Heart right ventricle (tissue), 16 donors: ENCODE measurements at regions of chr5 and their contacts with region 1.

Region 1: GRCh38 chr5:150357326-150358260 is at the start of gene TCOF1:
- DNase-seq: peak; percentile 96 to 98
- ATAC-seq: peak; percentile 97 to 100 (median 99)
- H3K4me3 ChIP-seq: peak within 1 kb of the TSS; percentile 72 to 99 (median 92)
- H3K27ac ChIP-seq: peak within 1 kb of the TSS in 9 of 10 donors; percentile 49 to 87 (median 62)
- H3K4me1 ChIP-seq: peaks cover 0 to 25% (median 16%) of the 10 kb centered on the region in 9 donors
- H3K27me3 ChIP-seq: no peaks in the 10 kb centered on the region
- CTCF ChIP-seq: no peak
- total RNA-seq, gene TCOF1: 12.4 to 21.3 (median 14.3) TPM

Region 2: DNA sequence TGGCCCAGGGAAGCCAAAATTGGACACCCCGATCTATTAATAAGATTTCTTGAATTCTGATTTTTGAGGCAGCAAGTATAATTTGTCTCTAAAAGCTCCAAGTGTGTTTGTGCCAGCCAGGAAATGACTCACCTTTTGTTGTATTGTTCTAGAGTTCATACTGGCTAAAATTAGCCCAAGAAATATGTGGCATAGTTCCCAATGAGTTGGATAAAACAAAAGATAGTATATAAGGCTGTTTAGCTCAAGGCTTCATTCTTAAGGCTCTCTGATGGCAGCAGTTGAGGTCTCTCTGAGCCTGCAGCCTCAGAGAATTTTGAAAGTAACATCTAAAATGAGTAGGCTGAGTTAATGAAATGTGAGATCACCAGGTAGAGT is 335.4 kb before region 1 on chr5:
- intact Hi-C with region 1: loop called in 1 of 10 experiments (anchors 10 kb)
- DNase-seq: peak in 1 of 2 donors; percentile 61
- ATAC-seq: peak; percentile 65 to 89 (median 78)
- H3K4me3 ChIP-seq: peak overlapping the region in 2 of 10 donors; percentile 28 to 30
- H3K27ac ChIP-seq: peak overlapping the region; percentile 7 to 83 (median 70)
- H3K4me1 ChIP-seq: peaks cover 5 to 62% (median 53%) of the 10 kb centered on the region in 9 donors
- H3K27me3 ChIP-seq: no peaks in the 10 kb centered on the region
- CTCF ChIP-seq: no peak

Region 3: GRCh38 chr5:150129813-150130492 is 227.6 kb before region 1 on chr5:
- intact Hi-C with region 1: loop called in 3 of 10 experiments (anchors 10 kb)
- DNase-seq: peak; percentile 71 to 76
- ATAC-seq: peak; percentile 35 to 81 (median 79)
- H3K4me3 ChIP-seq: peak overlapping the region in 4 of 10 donors; percentile 9 to 30 (median 26)
- H3K27ac ChIP-seq: peak overlapping the region in 6 of 10 donors; percentile 16 to 92 (median 34)
- H3K4me1 ChIP-seq: peaks cover 2 to 49% (median 33%) of the 10 kb centered on the region in 9 donors
- H3K27me3 ChIP-seq: no peaks in the 10 kb centered on the region
- CTCF ChIP-seq: peak; percentile 86 to 97 (median 94)

Region 4: DNA sequence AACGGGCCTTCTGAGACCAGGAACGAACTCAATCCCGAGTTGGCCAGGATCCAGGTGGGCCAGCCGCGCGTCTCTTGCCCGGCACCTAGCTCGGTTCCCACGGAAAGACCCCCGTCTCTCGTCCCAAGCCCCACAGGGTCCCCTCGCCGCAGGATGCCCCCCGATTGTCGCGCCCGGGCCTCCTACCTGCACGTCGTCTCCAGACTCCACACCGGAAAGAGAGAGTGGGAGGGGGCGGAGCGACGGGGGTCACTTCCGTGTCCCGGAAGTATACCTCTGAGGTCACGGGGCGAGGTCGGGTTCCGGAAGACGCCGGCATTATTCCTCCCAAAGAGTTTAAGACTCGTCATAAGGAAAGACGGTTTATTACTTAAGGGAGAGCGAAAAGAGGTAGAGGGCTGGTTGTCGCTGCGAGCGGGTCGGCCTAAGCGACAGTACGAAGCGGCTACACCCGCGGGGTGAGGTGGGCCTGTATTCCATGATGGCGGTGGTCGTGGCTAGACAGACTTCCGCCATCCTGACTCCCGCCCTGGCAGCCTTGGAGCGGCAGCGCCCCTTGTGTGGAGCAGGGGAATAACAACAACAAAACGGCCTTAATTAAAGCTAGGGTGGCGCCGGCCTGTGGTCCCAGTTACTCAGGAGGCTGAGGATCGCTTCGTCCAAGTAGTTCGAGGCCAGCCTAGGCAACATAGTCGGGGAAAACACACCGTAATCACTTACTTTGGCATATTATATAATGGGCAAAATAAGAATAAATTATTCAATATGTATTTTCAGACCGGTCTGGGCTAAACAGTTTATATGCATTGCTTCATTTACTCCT is 92.1 kb after region 1 on chr5 and contains the start of gene RPS14:
- intact Hi-C with region 1: loop called in 1 of 10 experiments (anchors 5 kb)
- DNase-seq: peak; percentile 92 to 94
- ATAC-seq: peak; percentile 96 to 99 (median 98)
- H3K4me3 ChIP-seq: peak within 1 kb of the TSS; percentile 45 to 97 (median 84)
- H3K27ac ChIP-seq: peak within 1 kb of the TSS; percentile 89 to 99 (median 97)
- H3K4me1 ChIP-seq: peaks cover 7 to 47% (median 18%) of the 10 kb centered on the region in 9 donors
- H3K27me3 ChIP-seq: no peaks in the 10 kb centered on the region
- CTCF ChIP-seq: peak; percentile 89 to 97 (median 92)
- total RNA-seq, gene RPS14: 984 to 1,344 (median 1,239) TPM